Gastrocnemius medialis (tissue), 4 donors: ENCODE measurements at regions of chrX and their contacts with region 1.

Region 1: DNA sequence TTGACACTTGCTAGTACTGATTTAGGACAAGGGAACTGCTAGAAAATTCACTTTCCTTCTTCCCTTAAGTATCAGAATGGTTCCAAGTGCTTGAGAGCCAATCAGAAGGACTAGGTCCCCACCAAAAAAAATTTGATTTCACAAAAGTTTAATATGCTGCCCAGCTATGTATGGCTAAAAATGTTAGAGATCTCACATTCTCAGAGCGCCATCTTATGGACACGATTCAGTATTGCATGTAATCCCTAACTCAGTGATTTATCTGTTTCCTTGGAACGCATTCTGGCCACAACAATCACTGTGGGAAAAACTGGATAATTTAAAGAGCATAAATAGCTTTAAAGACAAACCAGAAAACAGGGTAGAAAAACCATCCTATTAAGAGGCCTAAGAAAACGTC is 255.1 kb upstream of the GPC4 start:
- DNase-seq: no peak
- ATAC-seq: peak in 1 of 2 donors; percentile 46
- H3K4me3 ChIP-seq: no peak overlapping the region
- H3K27ac ChIP-seq: no peak overlapping the region
- H3K4me1 ChIP-seq: no peaks in the 10 kb centered on the region
- H3K27me3 ChIP-seq: no peaks in the 10 kb centered on the region
- CTCF ChIP-seq: peak; percentile 33 to 73 (median 65)
- POLR2A ChIP-seq: no peak

Region 2: GRCh38 chrX:132968296-132968949 is 702.0 kb before region 1 on chrX:
- in situ Hi-C with region 1: loop called in 1 of 4 experiments (anchors 10 kb)
- intact Hi-C with region 1: loop called (anchors 10 kb)
- DNase-seq: no peak
- ATAC-seq: peak; percentile 39 to 63
- H3K4me3 ChIP-seq: no peak overlapping the region
- H3K27ac ChIP-seq: no peak overlapping the region
- H3K4me1 ChIP-seq: peaks cover 0 to 8% of the 10 kb centered on the region in 2 donors
- H3K27me3 ChIP-seq: no peaks in the 10 kb centered on the region
- CTCF ChIP-seq: no peak
- POLR2A ChIP-seq: no peak

Region 3: GRCh38 chrX:132999150-132999549 is 671.2 kb before region 1 on chrX:
- in situ Hi-C with region 1: loop called in 2 of 4 experiments (anchors 25 kb)
- intact Hi-C with region 1: no loop called
- DNase-seq: no peak
- ATAC-seq: no peak
- H3K4me3 ChIP-seq: no peak overlapping the region
- H3K27ac ChIP-seq: no peak overlapping the region
- H3K4me1 ChIP-seq: no peaks in the 10 kb centered on the region
- H3K27me3 ChIP-seq: peaks cover 0 to 2% (median 0%) of the 10 kb centered on the region in 3 donors
- CTCF ChIP-seq: no peak
- POLR2A ChIP-seq: no peak

Region 4: DNA sequence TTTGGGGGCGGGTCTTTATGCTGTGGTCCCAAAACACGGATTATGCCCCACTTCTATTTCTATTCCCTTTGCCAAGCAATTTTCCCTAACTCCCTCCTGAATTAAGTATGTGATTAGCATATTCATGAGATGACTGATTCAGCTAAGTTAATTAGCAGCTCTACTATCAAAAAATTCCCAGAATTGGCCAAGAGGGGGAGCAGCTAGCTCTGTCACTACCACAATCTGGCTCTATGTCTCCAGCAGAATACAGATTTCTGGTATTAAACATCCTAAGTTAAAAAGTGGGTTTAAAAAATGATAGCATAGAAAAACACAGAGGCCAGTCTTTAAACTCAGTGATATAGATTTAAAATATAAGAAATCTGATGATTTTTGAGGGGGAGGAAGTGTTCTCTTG is 335.4 kb before region 1 on chrX:
- in situ Hi-C with region 1: loop called in 3 of 4 experiments (anchors 10 to 25 kb)
- intact Hi-C with region 1: loop called (anchors 1 kb)
- DNase-seq: no peak
- ATAC-seq: no peak
- H3K4me3 ChIP-seq: no peak overlapping the region
- H3K27ac ChIP-seq: no peak overlapping the region
- H3K4me1 ChIP-seq: no peaks in the 10 kb centered on the region
- H3K27me3 ChIP-seq: no peaks in the 10 kb centered on the region
- CTCF ChIP-seq: peak in 4 of 5 experiments; percentile 23 to 39 (median 30)
- POLR2A ChIP-seq: no peak